ENCODE measurements at regions of chr5 and their contacts with region 1.

Region 1: DNA sequence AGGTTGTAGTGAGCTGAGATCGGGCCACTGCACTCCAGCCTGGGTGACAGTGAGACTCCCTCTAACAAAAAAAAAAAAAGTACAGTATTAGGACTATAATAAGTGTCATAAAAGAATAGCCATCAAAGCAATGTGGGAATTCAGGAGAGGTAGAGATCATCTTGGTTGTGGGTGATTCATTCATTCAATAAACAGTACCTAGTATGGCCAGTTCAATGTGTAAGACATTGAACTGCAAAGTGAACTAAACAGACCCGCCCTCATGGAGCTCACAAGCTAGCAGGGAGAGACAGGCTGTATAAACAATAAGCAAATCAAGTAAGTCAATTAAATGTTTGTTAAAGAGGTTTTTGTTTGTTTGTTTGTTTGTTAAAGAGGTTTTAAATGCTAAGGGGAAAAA is 146.1 kb upstream of the RANBP3L start:
- DNase-seq: no peak
- H3K4me3 ChIP-seq: no peak overlapping the region
- H3K27ac ChIP-seq: no peak overlapping the region
- H3K4me1 ChIP-seq: no peaks in the 10 kb centered on the region
- H3K27me3 ChIP-seq: no peaks in the 10 kb centered on the region
- CTCF ChIP-seq: no peak

Region 2: DNA sequence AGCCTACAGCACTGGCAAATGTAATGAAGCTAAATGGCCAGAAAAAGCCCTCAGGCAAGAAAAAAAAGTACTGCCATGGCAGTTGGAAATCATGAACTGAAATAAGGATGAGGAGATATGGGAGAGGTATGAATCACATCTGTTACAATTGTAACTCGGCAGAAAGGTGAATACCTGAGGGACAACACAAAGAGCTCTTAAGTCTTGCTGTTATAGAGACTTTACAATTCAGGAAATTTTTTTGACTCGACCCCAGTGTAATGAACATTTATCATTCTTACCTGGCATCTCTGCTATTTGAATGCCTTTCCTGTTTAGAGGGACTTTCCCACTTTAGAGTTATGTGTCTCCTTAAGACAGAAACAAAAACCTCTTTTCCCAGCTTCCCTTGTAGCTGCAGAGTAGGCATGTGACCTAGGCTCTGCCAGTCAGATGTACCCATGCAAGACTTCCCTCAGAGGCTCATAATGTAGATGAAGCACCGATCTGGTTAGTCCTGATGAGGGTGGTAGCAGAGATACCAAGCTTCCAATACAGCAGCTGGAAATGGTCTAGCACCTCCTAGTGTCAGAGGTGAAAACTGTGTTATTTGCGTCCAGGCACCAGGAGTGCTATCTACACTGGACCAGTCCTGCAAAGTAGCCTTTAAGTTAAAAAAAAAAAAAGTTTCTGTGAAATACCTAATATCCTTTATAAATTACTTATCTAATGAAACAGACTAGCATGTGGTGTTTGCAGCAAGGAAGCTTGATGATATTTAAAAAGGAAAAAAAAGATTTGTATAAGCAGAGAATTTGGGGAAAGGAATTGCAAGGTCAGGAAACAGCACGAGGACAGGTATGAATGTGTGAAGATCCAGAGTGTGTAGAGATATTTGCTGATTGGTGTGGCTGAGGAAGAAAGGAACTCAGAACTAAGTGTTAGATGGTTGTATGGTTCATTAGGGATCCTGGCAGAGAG is 11.7 kb after region 1 on chr5:
- CTCF ChIA-PET with region 1: interaction called, 11 read pairs
- POLR2A ChIA-PET with region 1: no interaction called
- intact Hi-C with region 1: no loop called
- DNase-seq: peak; percentile 33
- H3K4me3 ChIP-seq: no peak overlapping the region
- H3K27ac ChIP-seq: no peak overlapping the region
- H3K4me1 ChIP-seq: no peaks in the 10 kb centered on the region
- H3K27me3 ChIP-seq: no peaks in the 10 kb centered on the region
- CTCF ChIP-seq: peak; percentile 65

Measured in A673 (cell line).